ENCODE measurements at regions of chr1 and their contacts with region 1.

Region 1: DNA sequence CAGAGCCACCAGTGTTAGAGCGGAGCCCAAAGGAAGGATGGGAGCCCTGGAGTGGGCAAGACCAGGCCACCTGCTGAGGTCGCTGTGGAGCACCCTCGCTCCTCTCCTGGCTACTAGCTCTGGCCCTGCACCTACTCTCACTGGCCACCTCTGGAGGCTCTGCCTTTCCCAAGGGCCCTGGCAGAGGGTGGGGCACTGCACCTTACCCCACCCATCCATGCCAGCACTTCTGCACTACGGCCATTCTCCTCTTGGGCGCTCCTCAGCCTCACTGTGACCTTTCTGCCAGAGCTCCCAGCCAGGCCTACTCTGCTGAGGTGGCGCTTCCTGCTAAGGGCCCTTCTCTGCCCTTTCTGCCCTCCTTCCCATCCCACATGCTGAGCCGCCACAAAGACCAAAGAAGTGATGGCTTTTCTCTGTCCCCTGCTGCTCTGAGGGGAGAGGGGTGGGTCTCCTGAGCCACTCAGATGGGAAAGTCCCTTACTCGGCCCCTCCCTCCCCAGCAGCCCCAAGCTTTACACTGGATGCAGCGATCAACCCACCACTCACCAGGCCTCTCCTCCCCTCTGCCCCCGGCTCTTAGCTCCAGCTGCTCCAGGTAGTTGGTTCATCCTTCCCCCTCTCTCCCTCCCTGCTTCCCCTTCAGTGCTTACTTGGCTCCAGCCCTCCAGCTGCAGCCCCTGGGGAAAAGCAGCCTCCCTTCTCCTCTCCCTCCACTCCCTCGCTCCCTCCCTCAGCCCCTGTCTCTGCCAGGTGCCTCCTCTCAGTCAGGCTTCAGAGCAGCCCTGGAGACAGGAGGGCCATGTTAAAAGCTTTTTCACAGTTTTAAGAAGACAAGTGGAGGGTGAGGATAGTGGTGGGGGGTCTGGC is 14.8 kb upstream of the TMEM222 start:
- DNase-seq: no peak
- H3K4me3 ChIP-seq: no peak overlapping the region
- H3K4me3 Mint-ChIP-seq: no peak overlapping the region
- H3K27ac ChIP-seq: no peak overlapping the region
- H3K27ac Mint-ChIP-seq: peak overlapping the region in 2 of 8 donors; percentile 36 to 88
- H3K4me1 ChIP-seq: no peaks in the 10 kb centered on the region
- H3K4me1 Mint-ChIP-seq: no peaks in the 10 kb centered on the region
- H3K27me3 ChIP-seq: no peaks in the 10 kb centered on the region
- H3K27me3 Mint-ChIP-seq: no peaks in the 10 kb centered on the region

Region 2: GRCh38 chr1:27321813-27322577 is 14.9 kb after region 1 on chr1 and contains the start of gene TMEM222:
- CTCF ChIA-PET with region 1: interaction called, 3 read pairs
- POLR2A ChIA-PET with region 1: interaction called, 11 read pairs
- DNase-seq: peak; percentile 95 to 97 (median 97)
- H3K4me3 ChIP-seq: peak within 1 kb of the TSS; percentile 93
- H3K4me3 Mint-ChIP-seq: peak within 1 kb of the TSS; percentile 95 to 99 (median 97)
- H3K27ac ChIP-seq: peak within 1 kb of the TSS; percentile 95
- H3K27ac Mint-ChIP-seq: peak within 1 kb of the TSS; percentile 82 to 97 (median 96)
- H3K4me1 ChIP-seq: peaks cover 36% of the 10 kb centered on the region
- H3K4me1 Mint-ChIP-seq: peaks cover 40 to 58% (median 50%) of the 10 kb centered on the region in 3 donors
- H3K27me3 ChIP-seq: peaks cover 9% of the 10 kb centered on the region
- H3K27me3 Mint-ChIP-seq: peaks cover 4% of the 10 kb centered on the region in 2 donors
- total RNA-seq, gene TMEM222: 52.0 to 54.9 TPM